GM12878 (cell line): ENCODE measurements at regions of chr19 and their contacts with region 1.

Region 1: DNA sequence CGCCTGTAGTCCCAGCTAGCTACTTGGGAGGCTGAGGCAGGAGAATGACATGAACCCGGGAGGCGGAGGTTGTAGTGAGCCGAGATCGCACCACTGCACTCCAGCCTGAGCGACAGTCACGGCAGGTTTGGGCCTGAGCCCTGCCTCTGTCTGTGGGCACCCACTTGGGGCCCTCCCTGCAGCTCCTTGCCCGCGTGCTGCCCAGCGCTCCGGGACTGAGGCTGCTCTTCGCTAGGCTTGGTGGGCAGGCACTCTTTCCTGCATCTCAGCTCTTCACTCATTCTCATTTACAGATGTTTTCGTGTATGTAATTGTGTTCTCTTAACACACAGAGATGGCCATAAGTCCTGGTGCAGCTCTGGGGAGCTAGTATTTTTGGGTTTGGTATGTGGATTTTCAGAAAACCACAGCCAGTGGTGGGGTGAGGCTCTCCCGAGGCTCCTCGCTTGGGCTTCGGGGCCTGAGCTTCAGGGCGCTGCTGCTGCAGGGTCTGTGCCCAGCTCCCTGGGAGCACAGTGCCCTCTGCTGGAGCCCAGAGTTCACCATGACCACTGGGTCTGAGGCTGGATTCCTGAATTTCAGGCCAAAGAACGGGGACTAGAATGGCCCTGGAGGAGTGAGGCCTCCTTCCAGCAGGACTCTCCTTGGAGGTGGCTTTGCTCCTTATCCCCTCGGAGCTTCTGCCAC is 15.2 kb downstream of the UPF1 start:
- DNase-seq: no peak
- ATAC-seq: peak; percentile 75
- H3K4me3 ChIP-seq: no peak overlapping the region
- H3K27ac ChIP-seq: no peak overlapping the region
- H3K4me1 ChIP-seq: peaks cover 56% of the 10 kb centered on the region
- H3K27me3 ChIP-seq: no peaks in the 10 kb centered on the region
- CTCF ChIP-seq: peak; percentile 80 to 94 (median 89)
- EP300 ChIP-seq: no peak
- POLR2A ChIP-seq: no peak
- RAD21 ChIP-seq: peak; percentile 88

Region 2: DNA sequence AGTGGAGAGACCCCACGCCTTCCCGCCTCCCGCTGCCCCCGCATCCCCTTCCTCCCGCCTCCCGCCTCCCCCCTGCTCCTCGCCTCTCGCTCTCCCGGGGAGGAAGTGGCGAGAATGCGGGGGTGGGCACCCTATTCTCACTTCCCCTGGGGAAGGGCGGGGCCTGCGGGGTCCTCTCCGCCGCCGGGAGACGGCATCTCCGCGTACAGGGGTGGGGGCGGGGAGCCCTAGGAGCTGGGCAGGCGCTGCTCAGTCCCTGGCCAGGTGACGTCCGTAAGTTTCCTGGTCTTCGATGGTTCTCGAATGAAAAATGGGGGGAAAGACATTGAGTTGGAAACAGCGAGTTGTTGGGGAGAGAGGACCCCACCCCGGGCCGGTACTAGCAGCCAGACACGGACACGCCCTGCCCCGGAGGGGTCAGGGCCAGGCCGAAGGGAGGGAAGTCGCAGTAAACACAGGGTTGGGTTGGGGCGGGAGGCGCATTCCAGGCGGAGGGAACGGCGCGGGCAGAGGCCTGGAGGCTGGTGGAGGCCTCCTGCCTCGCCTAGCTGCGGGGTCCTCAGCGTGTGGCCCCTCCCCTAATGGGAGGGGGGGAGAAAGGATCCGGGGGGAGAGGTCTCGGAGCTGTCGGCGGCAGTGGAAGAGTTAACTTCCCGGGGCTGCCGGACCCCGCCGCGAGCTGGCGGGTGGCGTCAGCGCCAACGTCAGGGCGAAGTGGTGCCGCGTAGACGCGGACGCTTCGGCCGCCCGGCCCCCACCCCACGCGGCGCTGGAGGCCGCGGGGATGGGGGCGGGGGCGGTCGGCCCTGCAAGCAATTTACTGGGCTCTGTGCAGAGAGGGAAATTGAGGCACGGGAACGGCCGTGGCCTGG is 555.2 kb before region 1 on chr19:
- CTCF ChIA-PET with region 1: no interaction called
- POLR2A ChIA-PET with region 1: interaction called, 11 read pairs
- RAD21 ChIA-PET with region 1: no interaction called
- SMC1A ChIA-PET with region 1: no interaction called
- in situ Hi-C with region 1: no loop called
- intact Hi-C with region 1: no loop called
- DNase-seq: no peak
- ATAC-seq: peak; percentile 69
- H3K4me3 ChIP-seq: peak overlapping the region; percentile 96
- H3K27ac ChIP-seq: peak overlapping the region; percentile 96
- H3K4me1 ChIP-seq: peaks cover 32% of the 10 kb centered on the region
- H3K27me3 ChIP-seq: no peaks in the 10 kb centered on the region; a peak in 1 of 4 replicates
- CTCF ChIP-seq: no peak
- EP300 ChIP-seq: peak; percentile 75 to 83; a peak in 3 of 4 replicates
- POLR2A ChIP-seq: peak; percentile 72
- RAD21 ChIP-seq: no peak; the same call in 1 of the 2 replicates

Region 3: DNA sequence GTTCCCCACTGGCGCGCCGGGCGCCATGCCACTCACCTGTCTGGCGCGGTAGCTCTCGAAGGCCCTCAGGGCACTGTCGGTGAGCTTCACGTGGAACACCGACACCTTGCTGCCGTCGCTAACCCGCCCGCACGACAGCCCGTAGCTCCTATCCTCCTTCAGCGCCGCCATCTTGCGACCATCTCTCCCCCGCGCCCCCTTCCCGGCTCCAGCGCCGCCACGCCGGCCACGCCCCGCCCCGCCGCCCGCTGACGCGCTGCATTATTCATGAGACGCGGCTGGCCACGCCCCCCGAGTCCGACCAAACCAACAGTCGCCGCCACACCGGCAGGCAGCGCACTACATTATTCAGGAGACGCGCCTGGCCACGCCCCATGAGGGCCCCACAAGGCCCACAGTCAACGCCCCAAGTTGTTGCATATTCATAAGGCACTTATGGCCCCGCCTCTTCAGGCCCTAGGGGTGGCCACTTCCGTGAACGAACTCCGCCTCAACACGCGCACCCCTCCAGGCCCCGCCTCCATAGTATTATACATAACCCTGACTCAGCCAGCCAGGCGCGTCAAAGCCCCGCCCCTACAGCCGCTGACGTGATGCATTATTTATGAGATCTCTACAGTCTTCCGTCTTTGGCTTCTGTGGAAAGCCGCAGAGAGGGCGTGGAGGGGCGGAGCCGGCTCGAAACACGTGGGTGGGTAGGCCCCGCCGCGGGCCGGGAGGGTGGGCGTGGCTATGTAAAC is 324.9 kb before region 1 on chr19 and contains the start of gene ELL:
- CTCF ChIA-PET with region 1: interaction called, 21 read pairs
- POLR2A ChIA-PET with region 1: no interaction called
- RAD21 ChIA-PET with region 1: interaction called, 4 read pairs
- SMC1A ChIA-PET with region 1: interaction called, 8 read pairs
- in situ Hi-C with region 1: no loop called
- intact Hi-C with region 1: no loop called
- DNase-seq: peak; percentile 99
- ATAC-seq: peak; percentile 94
- H3K4me3 ChIP-seq: peak within 1 kb of the TSS; percentile 98
- H3K27ac ChIP-seq: peak within 1 kb of the TSS; percentile 89
- H3K4me1 ChIP-seq: peaks cover 8% of the 10 kb centered on the region
- H3K27me3 ChIP-seq: no peaks in the 10 kb centered on the region
- CTCF ChIP-seq: 0 out of 6 replicates have a peak, but pooled peaks of 1 of the 3 experiments have one; percentile 2
- EP300 ChIP-seq: no peak; a peak in 1 of 4 replicates
- POLR2A ChIP-seq: peak; percentile 98
- RAD21 ChIP-seq: no peak
- polyA plus RNA-seq, gene ELL: 0.91 to 0.98 TPM

Region 4: DNA sequence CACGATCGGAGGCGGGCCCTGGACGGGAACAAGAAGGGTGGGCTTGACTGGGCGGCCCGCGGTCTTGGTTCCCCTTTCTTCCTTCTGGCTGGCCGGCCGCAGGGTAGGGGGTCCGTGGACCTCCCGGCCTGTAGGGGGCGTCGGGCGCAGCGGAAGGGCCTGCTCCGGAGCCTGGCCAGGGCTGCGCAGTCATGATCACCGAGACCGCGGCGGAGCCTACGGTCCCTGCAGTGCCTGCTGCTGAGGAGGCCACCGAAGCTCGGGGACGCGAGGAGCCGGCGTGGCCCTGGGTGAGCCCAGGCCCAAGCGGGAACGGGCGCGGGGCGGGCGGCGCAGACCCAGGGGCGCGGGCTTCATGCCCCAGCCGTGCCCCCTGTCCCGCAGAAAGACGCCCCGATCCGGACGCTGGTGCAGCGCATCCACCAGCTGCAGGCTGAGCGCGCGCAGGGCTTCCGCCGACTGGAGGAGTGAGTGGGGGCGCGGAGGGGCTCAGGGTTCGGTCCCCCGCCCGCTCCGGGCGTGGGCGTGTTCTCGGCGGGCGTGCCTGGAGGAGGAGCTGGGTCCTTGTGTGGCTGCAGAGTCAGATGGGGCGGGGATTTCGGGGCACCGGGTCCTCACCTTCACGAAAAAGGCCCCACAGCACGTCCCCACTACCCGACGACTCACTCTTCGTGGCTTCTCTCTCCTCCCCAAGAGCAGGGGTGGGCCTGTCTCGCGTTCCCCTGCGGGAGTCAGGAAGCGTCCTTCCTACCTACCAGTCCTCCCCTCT is 258.2 kb before region 1 on chr19 and contains the start of gene REX1BD:
- CTCF ChIA-PET with region 1: interaction called, 24 read pairs
- POLR2A ChIA-PET with region 1: no interaction called
- RAD21 ChIA-PET with region 1: interaction called, 7 read pairs
- SMC1A ChIA-PET with region 1: interaction called, 5 read pairs
- in situ Hi-C with region 1: no loop called
- intact Hi-C with region 1: loop called (anchors 5 kb)
- DNase-seq: peak; percentile 54
- ATAC-seq: peak; percentile 92
- H3K4me3 ChIP-seq: peak within 1 kb of the TSS; percentile 70
- H3K27ac ChIP-seq: peak within 1 kb of the TSS; percentile 72
- H3K4me1 ChIP-seq: peaks cover 32% of the 10 kb centered on the region
- H3K27me3 ChIP-seq: peaks cover 0 to 2% of the 10 kb centered on the region in 2 experiments; a peak in 1 of 4 replicates
- CTCF ChIP-seq: peak; percentile 89 to 92 (median 91)
- EP300 ChIP-seq: 0 out of 4 replicates have a peak, but pooled peaks of 1 of the 2 experiments have one; percentile 3
- POLR2A ChIP-seq: peak; percentile 91
- RAD21 ChIP-seq: no peak
- polyA plus RNA-seq, gene REX1BD: 1.1 to 3.3 TPM

Region 5: GRCh38 chr19:18683213-18683939 is 163.6 kb before region 1 on chr19 and contains the start of gene CRTC1:
- CTCF ChIA-PET with region 1: interaction called, 5 read pairs
- POLR2A ChIA-PET with region 1: no interaction called
- RAD21 ChIA-PET with region 1: interaction called, 6 read pairs
- SMC1A ChIA-PET with region 1: no interaction called
- in situ Hi-C with region 1: no loop called
- intact Hi-C with region 1: loop called (anchors 10 kb)
- DNase-seq: peak; percentile 39
- ATAC-seq: peak; percentile 81
- H3K4me3 ChIP-seq: peak within 1 kb of the TSS; percentile 68
- H3K27ac ChIP-seq: peak within 1 kb of the TSS; percentile 66
- H3K4me1 ChIP-seq: peaks cover 12% of the 10 kb centered on the region
- H3K27me3 ChIP-seq: no peaks in the 10 kb centered on the region
- CTCF ChIP-seq: no peak
- EP300 ChIP-seq: no peak
- POLR2A ChIP-seq: peak; percentile 92
- RAD21 ChIP-seq: no peak
- polyA plus RNA-seq, gene CRTC1: 0.02 TPM in 1 of 2 experiments, not detected in the other

Region 6: DNA sequence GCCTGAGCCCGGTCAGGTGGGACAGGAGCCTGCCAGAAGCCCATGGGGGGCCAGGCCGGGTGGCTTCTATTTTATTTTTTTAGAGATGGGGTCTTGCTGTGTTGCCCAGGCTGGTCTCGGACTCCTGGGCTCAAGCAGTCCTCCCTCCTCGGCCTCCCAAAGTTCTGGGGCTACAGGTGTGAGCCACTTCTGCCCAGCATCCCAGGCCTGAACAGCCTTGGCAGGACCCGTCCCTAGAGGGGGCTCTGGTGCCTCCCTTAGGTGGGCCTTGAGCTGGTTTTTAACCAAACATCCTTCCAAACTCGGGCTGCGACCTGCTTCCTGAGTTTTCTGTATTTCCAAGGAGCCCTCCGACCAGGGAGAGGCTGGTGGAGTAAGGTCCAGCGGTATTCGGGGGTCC is 66.4 kb before region 1 on chr19:
- CTCF ChIA-PET with region 1: interaction called, 11 read pairs
- POLR2A ChIA-PET with region 1: no interaction called
- RAD21 ChIA-PET with region 1: interaction called, 9 read pairs
- SMC1A ChIA-PET with region 1: interaction called, 4 read pairs
- in situ Hi-C with region 1: no loop called
- intact Hi-C with region 1: no loop called
- DNase-seq: no peak
- ATAC-seq: 0 out of 3 replicates have a peak, but pooled peaks have one; percentile 24
- H3K4me3 ChIP-seq: no peak overlapping the region
- H3K27ac ChIP-seq: no peak overlapping the region
- H3K4me1 ChIP-seq: no peaks in the 10 kb centered on the region
- H3K27me3 ChIP-seq: no peaks in the 10 kb centered on the region; a peak in 1 of 4 replicates
- CTCF ChIP-seq: peak; percentile 22 to 37 (median 28); a peak in 3 of 6 replicates
- EP300 ChIP-seq: no peak
- POLR2A ChIP-seq: no peak
- RAD21 ChIP-seq: peak; percentile 39

Region 7: GRCh38 chr19:18814063-18814462 is 32.9 kb before region 1 on chr19:
- CTCF ChIA-PET with region 1: no interaction called
- POLR2A ChIA-PET with region 1: no interaction called
- RAD21 ChIA-PET with region 1: no interaction called
- SMC1A ChIA-PET with region 1: no interaction called
- in situ Hi-C with region 1: no loop called
- intact Hi-C with region 1: no loop called
- DNase-seq: no peak
- ATAC-seq: no peak
- H3K4me3 ChIP-seq: no peak overlapping the region
- H3K27ac ChIP-seq: no peak overlapping the region
- H3K4me1 ChIP-seq: no peaks in the 10 kb centered on the region
- H3K27me3 ChIP-seq: no peaks in the 10 kb centered on the region; a peak in 1 of 4 replicates
- CTCF ChIP-seq: no peak
- EP300 ChIP-seq: no peak
- POLR2A ChIP-seq: no peak
- RAD21 ChIP-seq: no peak

Region 8: GRCh38 chr19:18865973-18866799 is 19.2 kb after region 1 on chr19:
- CTCF ChIA-PET with region 1: interaction called, 7 read pairs
- POLR2A ChIA-PET with region 1: interaction called, 10 read pairs
- RAD21 ChIA-PET with region 1: no interaction called
- SMC1A ChIA-PET with region 1: no interaction called
- in situ Hi-C with region 1: no loop called
- intact Hi-C with region 1: no loop called
- DNase-seq: no peak
- ATAC-seq: peak; percentile 97
- H3K4me3 ChIP-seq: no peak overlapping the region
- H3K27ac ChIP-seq: no peak overlapping the region
- H3K4me1 ChIP-seq: peaks cover 4% of the 10 kb centered on the region
- H3K27me3 ChIP-seq: no peaks in the 10 kb centered on the region
- CTCF ChIP-seq: peak; percentile 83 to 96 (median 92); a peak in 4 of 6 replicates
- EP300 ChIP-seq: no peak
- POLR2A ChIP-seq: peak; percentile 38
- RAD21 ChIP-seq: peak; percentile 68